Psoas muscle (tissue), 8 donors: ENCODE measurements at regions of chr12 and their contacts with region 1.

Region 1: GRCh38 chr12:53984901-53985709 is at the start of gene HOXC10:
- DNase-seq: peak; percentile 94 to 98
- ATAC-seq: peak; percentile 71 to 94 (median 82)
- H3K4me3 ChIP-seq: peak within 1 kb of the TSS; percentile 79
- H3K27ac ChIP-seq: peak within 1 kb of the TSS; percentile 95
- H3K4me1 ChIP-seq: peaks cover 19% of the 10 kb centered on the region
- H3K27me3 ChIP-seq: peaks cover 0 to 3% (median 0%) of the 10 kb centered on the region in 3 donors
- CTCF ChIP-seq: peak; percentile 71
- total RNA-seq, gene HOXC10: 3.0 to 79.4 (median 34.3) TPM

Region 2: GRCh38 chr12:53995378-53996239 is 10.5 kb after region 1 on chr12:
- intact Hi-C with region 1: loop called in 1 of 2 experiments (anchors 2 kb)
- DNase-seq: peak; percentile 57 to 94
- ATAC-seq: peak in 3 of 4 donors; percentile 56 to 73 (median 70)
- H3K4me3 ChIP-seq: peak overlapping the region; percentile 78
- H3K27ac ChIP-seq: peak overlapping the region; percentile 95
- H3K4me1 ChIP-seq: peaks cover 24% of the 10 kb centered on the region
- H3K27me3 ChIP-seq: peaks cover 0 to 3% (median 0%) of the 10 kb centered on the region in 3 donors
- CTCF ChIP-seq: no peak

Region 3: DNA sequence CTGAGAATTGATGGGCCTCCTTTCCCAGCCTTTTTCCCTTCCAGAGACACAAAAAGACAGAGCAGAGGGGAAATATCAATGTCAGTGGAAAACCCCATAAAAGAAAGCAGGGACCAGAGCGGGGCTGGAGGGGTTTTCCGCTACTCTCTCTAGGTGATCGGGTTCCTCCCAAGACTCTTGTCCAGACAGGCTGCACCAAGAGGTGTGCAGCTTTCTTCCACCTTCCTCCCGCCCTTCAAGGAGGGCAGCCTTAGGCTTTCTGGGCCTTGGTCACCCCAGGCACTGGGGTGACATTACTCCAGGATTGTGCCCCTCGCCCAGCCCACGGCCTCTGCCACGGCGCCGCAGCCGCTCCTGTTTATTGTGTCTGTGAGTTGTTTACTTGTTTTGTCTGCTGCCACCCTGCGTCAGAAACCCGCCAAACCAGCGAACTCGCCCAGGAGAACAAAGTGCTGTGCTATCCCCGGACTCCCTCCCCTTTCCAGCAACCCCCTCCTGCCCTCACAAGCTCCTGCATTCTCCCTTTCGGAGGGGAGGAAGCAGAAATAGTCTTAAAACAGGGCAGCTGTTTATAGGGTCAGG is 36.4 kb after region 1 on chr12:
- intact Hi-C with region 1: loop called (anchors 1 kb)
- DNase-seq: peak; percentile 57 to 85
- ATAC-seq: peak; percentile 13 to 45 (median 29)
- H3K4me3 ChIP-seq: peak overlapping the region; percentile 77
- H3K27ac ChIP-seq: peak overlapping the region; percentile 99
- H3K4me1 ChIP-seq: peaks cover 51% of the 10 kb centered on the region
- H3K27me3 ChIP-seq: no peaks in the 10 kb centered on the region
- CTCF ChIP-seq: peak; percentile 43

Region 4: DNA sequence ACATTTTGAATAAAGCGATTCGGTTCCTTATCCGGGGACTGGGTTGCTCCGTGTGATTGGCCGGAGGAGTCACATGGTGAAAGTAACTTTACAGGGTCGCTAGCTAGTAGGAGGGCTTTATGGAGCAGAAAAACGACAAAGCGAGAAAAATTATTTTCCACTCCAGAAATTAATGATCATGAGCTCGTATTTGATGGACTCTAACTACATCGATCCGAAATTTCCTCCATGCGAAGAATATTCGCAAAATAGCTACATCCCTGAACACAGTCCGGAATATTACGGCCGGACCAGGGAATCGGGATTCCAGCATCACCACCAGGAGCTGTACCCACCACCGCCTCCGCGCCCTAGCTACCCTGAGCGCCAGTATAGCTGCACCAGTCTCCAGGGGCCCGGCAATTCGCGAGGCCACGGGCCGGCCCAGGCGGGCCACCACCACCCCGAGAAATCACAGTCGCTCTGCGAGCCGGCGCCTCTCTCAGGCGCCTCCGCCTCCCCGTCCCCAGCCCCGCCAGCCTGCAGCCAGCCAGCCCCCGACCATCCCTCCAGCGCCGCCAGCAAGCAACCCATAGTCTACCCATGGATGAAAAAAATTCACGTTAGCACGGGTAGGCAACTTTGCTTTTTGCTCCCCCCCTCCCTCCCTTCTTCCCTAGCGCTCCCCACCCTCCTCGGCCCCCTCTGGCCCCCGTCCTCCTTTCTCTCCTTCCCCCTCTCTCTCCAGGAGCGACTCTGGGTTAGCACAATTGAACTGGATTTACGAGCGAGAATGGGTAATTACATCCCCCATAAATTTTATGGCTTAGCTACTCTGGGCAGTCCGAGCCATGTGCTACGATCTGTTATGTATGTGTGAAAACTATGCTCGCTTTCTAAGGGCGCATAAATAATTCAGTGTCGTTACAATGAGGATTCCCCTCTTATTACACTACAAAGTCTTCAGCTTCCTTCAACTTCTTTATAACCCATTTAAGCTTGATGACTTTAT is 68.9 kb after region 1 on chr12 and contains the start of gene HOXC4:
- intact Hi-C with region 1: no loop called
- DNase-seq: no peak
- ATAC-seq: peak; percentile 52 to 80 (median 63)
- H3K4me3 ChIP-seq: peak within 1 kb of the TSS; percentile 63
- H3K27ac ChIP-seq: no peak within 1 kb of the TSS
- H3K4me1 ChIP-seq: no peaks in the 10 kb centered on the region
- H3K27me3 ChIP-seq: no peaks in the 10 kb centered on the region
- CTCF ChIP-seq: no peak
- total RNA-seq, gene HOXC4: 1.6 to 4.7 (median 2.6) TPM

Region 5: DNA sequence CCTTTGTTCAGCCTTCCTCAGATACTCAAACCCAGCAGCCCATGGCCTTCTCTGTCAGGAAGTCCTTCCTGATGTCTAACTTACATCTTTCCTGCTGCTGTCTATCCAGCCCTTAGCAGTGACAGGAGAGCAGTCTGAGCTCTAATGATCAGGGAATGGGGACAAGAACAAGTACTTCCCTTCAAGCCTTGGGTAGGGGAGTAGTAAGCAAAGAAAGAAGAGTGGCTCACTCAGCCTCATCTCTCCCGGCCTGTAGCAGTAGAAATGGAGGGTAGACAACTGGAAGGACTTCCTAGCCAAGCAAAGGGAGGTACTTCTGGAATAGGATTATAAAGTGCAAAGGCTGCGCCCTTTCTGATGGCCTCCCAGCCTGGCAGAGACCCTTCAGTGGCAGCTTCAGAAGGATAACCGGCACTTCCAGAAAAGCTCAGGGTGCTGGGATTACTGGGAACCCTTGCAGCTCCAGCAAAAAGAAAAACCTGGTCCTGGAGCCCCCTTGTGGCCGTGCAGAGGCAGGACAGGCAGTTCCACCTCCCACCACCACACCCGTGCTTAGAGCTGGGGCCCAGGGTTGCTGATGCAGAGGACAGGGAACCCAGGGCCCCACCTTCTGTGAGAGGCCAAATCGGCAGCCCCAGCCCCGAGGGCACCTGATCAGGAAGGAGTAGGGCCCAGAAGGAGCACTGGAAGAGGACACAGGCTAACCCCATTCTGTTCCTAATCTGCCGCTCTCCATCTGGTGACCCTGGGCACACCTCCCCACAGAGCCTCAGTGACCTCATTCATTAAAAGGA is 216.1 kb after region 1 on chr12:
- intact Hi-C with region 1: loop called in 1 of 2 experiments (anchors 2 kb)
- DNase-seq: peak; percentile 67 to 88
- ATAC-seq: peak; percentile 60 to 78 (median 66)
- H3K4me3 ChIP-seq: no peak overlapping the region
- H3K27ac ChIP-seq: no peak overlapping the region
- H3K4me1 ChIP-seq: peaks cover 18% of the 10 kb centered on the region
- H3K27me3 ChIP-seq: no peaks in the 10 kb centered on the region
- CTCF ChIP-seq: peak; percentile 97

Region 6: DNA sequence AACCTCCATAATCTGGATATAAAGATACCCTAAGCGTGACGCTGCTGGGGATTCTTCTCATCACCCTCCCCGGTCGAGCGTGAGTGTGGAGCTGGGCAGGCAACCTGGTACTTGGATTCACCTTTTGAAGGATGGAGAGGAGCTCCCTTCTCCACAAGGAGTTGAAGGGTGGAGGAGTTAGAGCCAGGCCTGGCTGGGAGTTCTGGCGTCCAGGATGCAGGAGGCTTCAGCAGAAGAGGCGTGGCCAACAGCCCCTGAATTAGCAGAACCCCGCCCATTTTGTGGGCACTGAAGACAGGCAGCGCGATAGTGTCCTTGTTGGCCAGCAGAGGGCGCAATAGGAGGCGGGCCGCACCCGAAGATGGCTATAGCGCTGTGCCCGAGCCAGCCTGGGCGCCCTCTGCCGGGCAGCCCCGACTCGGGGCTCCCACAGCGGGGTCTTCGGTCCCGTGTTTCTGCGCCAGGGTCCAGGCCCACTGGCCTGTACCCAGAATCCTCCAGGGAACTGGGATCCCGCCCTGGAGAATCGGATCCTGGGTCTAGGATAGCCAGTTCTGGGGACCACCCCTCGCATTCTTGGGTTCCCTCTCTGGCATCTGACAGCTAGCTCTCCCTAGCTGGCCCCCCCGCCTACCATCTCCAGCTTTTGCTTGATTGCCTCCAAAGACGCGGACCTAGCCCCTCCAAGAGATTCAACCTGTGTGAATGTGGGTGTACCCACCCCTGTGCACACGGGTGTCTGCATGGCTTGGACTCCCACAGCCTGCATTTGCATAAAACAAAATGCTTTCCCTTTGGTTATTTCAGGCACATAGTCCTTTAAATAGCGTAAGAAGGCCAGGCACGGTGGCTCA is 229.7 kb after region 1 on chr12:
- intact Hi-C with region 1: loop called in 1 of 2 experiments (anchors 2 kb)
- DNase-seq: peak; percentile 87 to 95
- ATAC-seq: peak; percentile 92 to 95 (median 94)
- H3K4me3 ChIP-seq: peak overlapping the region; percentile 48
- H3K27ac ChIP-seq: no peak overlapping the region
- H3K4me1 ChIP-seq: peaks cover 11% of the 10 kb centered on the region
- H3K27me3 ChIP-seq: peaks cover 0 to 5% (median 0%) of the 10 kb centered on the region in 3 donors
- CTCF ChIP-seq: peak; percentile 97

Region 7: DNA sequence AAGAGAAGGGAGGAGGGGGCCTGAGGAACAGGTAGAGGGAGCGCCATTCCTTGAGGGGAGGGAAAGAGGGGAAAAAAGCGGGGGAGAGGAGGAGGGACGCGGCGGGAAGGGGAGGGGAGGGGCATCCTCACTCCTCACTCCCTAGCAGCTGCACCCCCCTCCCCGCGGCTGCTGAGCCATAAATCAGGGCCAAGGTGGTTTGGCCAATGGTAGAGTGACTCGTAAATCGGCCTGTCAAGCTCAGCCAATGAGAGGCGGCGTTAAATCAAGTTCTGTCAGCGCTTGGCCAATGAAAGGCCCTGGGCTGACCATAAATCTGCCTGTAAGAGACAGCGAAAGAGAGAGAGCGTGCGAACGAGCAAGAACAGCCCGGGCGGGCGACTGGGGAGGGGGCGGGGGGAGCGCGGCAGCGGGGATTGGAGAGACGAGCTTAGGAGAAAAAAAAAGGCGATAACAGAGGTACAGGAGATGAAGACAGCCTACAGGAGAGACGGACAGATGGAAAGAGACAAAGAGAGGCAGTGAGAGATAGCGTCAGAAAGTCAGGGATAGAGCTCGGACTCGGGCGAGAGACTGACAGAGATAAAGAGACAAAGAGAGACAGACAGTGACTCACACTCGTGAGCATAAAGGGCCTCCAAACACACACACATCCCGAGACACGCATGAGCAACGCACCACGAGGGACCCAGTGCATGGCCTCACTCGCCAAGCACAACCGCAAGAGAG is 374.1 kb after region 1 on chr12:
- intact Hi-C with region 1: loop called in 1 of 2 experiments (anchors 5 kb)
- DNase-seq: peak; percentile 96 to 98
- ATAC-seq: peak; percentile 95
- H3K4me3 ChIP-seq: peak overlapping the region; percentile 65
- H3K27ac ChIP-seq: peak overlapping the region; percentile 89
- H3K4me1 ChIP-seq: peaks cover 14% of the 10 kb centered on the region
- H3K27me3 ChIP-seq: no peaks in the 10 kb centered on the region
- CTCF ChIP-seq: no peak

Region 8: GRCh38 chr12:54379401-54380201 is 394.5 kb after region 1 on chr12:
- intact Hi-C with region 1: loop called in 1 of 2 experiments (anchors 10 kb)
- DNase-seq: peak; percentile 94 to 96
- ATAC-seq: peak; percentile 78 to 90 (median 88)
- H3K4me3 ChIP-seq: peak overlapping the region; percentile 63
- H3K27ac ChIP-seq: peak overlapping the region; percentile 76
- H3K4me1 ChIP-seq: peaks cover 65% of the 10 kb centered on the region
- H3K27me3 ChIP-seq: no peaks in the 10 kb centered on the region
- CTCF ChIP-seq: peak; percentile 100